Posterior vena cava (tissue), 2 donors: ENCODE measurements at regions of chr10 and their contacts with region 1.

Region 1: GRCh38 chr10:112875476-112876267 is 74.4 kb upstream of the TCF7L2 start:
- DNase-seq: peak; percentile 82

Region 2: DNA sequence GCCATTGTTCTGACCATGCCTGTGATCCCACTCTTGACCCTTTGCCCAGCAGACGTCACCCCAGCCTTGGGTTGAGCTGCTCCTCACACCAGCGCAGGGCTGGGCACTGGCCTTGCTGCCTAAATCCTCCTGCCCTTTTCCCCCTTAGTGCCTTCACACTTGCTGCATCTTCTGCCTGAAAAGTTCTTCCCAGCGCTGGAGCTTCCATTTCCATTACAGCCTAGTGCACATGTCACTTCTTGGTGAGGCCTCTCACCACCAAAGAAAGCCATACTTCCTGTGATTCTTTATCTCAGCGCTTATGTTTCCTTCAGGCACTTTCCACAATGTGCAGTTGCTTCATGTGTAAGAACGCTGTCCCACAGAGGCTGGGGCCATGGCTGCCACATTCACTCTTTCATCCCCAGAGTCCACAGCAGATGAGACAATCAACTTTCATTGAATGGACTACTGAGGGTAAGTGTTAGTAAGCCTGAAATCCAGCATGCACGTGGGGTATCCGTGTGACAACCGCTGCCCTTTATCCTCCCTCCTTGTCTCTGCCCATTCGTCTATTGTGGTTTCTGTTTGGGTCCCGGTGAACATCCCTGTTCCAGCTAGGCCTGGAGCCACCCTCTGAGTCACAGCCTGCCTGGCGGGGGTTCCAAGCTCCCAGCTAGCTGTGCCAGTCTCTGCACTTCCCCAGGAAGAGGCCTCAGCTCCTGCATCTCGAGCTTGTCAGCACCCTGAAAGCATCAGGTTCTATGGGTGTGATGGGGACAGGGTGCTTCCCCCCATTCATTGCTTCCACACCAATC is 1761.5 kb before region 1 on chr10:
- intact Hi-C with region 1: loop called in 1 of 2 experiments (anchors 5 kb)
- DNase-seq: peak; percentile 86

Region 3: DNA sequence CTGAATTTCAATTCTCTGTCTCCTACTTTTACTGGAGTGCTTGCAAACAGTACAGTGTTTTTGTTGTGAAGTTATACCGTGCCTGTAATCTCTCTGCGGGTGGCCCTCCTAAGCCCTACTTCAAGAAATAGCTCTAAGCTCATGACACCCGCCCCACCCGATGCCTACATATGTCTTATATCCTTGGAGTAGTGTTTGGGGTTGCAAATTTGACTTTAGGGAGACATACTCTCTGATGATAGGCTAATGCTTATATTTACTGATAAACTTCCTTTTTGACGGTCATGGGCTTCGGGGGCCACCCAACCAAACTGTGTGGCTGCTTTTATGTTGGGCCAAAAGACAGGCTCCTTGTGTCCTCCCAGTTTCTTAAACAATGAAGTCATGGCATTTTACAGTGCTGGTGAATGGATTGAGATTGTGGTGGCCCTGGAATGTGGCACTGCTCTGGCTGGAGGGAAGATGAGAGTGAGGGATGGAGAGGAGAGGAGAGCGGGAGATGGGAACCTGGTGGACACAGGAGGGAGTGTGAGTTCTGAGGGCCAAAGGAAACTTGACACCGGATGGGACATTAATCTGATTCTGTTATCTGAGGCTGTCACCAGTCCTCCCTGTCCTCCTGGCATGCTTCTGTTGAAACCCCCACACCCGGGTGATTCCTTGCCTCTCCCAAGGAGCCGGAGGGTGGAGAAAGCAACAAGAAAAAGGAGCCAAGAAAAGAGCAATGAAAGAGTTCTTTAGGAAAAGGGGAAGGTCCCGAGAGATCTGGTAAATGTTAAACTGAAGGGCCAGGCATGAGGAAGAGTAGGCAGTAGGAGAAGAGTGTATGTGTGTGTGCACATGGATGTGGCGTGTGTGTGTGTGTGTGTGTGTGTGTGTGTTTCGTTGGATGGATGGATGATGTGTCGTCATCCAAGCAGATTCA is 187.6 kb after region 1 on chr10:
- intact Hi-C with region 1: no loop called
- DNase-seq: no peak

Region 4: GRCh38 chr10:113347508-113347907 is 471.8 kb after region 1 on chr10:
- intact Hi-C with region 1: no loop called
- DNase-seq: no peak

Region 5: GRCh38 chr10:113441220-113441619 is 565.5 kb after region 1 on chr10:
- intact Hi-C with region 1: no loop called
- DNase-seq: no peak